Activated CD4-positive, alpha-beta T cell treated with anti-CD3 and anti-CD28 coated beads for 36 hours (primary cell): ENCODE measurements at regions of chr7 and their contacts with region 1.

Region 1: GRCh38 chr7:156892821-156893706 is at the start of gene LMBR1:
- DNase-seq: peak; percentile 97
- ATAC-seq: peak; percentile 89
- H3K4me3 Mint-ChIP-seq: peak within 1 kb of the TSS; percentile 88
- H3K27ac Mint-ChIP-seq: peak within 1 kb of the TSS; percentile 90
- H3K4me1 Mint-ChIP-seq: peaks cover 38% of the 10 kb centered on the region
- H3K27me3 Mint-ChIP-seq: no peaks in the 10 kb centered on the region
- total RNA-seq, gene LMBR1: 31.0 to 39.0 TPM

Region 2: DNA sequence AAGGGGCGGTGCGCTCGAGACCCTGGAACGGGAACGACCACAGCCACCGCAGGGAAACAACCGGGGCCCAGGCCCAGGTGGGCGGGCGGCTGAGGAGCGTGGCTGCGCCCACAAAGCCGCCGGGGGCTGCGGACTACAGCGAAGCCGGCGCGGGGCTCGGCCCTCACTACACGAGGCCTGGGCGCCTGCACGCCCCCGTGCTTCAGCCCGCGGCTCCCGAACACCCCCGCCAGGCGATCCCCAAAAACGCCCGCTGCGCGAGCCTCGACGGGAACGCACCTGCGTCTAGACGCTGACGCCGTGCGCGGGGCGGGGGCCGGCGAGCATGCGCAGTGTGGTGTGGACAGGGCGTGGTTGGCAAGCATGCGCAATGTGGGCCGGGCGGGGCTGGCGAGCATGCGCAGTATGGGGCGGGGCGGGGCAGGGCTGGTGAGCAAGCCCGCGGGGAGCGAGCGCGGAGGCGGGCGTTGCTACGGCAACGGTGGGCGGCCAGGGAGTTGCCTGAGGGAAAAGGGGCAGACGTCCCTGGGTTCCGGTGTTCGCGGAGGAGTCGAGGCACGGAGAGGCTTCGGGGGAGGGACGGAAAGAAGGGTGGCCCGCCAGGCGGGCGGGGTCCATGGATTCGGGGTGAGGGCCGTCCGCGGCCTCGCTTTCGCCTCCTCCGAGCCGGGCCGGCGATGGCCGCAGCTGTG is 252.7 kb before region 1 on chr7 and contains the start of gene RNF32:
- CTCF ChIA-PET with region 1: no interaction called
- POLR2A ChIA-PET with region 1: no interaction called
- intact Hi-C with region 1: loop called (anchors 1 kb)
- DNase-seq: peak; percentile 100
- ATAC-seq: peak; percentile 90
- H3K4me3 Mint-ChIP-seq: peak within 1 kb of the TSS; percentile 76
- H3K27ac Mint-ChIP-seq: peak within 1 kb of the TSS; percentile 87
- H3K4me1 Mint-ChIP-seq: peaks cover 15% of the 10 kb centered on the region
- H3K27me3 Mint-ChIP-seq: peaks cover 29% of the 10 kb centered on the region
- total RNA-seq, gene RNF32: 0.71 to 0.90 TPM

Region 3: DNA sequence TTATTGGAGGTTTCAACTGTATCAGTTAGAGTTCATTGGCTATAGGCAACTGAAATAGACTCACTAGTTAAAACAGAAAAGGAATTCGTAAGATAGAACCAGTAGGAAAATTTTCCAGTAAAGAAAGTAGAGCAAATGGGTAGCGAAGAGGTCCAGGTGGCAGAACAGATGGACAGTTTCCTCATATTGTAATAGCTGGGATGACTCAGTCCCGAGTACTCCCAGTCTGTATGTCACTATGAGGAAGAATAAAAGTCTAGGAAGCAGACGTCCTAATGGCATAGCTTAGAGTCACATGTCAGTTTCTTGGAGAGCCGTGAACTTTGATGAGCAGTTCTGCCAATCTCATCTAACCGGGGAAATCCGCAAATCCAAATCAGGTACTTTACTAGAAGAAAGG is 157.2 kb before region 1 on chr7:
- CTCF ChIA-PET with region 1: no interaction called
- POLR2A ChIA-PET with region 1: no interaction called
- intact Hi-C with region 1: no loop called
- DNase-seq: no peak
- ATAC-seq: no peak
- H3K4me3 Mint-ChIP-seq: no peak overlapping the region
- H3K27ac Mint-ChIP-seq: no peak overlapping the region
- H3K4me1 Mint-ChIP-seq: no peaks in the 10 kb centered on the region
- H3K27me3 Mint-ChIP-seq: no peaks in the 10 kb centered on the region

Region 4: GRCh38 chr7:156773966-156774365 is 119.1 kb before region 1 on chr7:
- CTCF ChIA-PET with region 1: no interaction called
- POLR2A ChIA-PET with region 1: no interaction called
- intact Hi-C with region 1: loop called in 1 of 2 experiments (anchors 1 kb)
- DNase-seq: no peak
- ATAC-seq: no peak
- H3K4me3 Mint-ChIP-seq: no peak overlapping the region
- H3K27ac Mint-ChIP-seq: no peak overlapping the region
- H3K4me1 Mint-ChIP-seq: peaks cover 58% of the 10 kb centered on the region
- H3K27me3 Mint-ChIP-seq: no peaks in the 10 kb centered on the region

Region 5: DNA sequence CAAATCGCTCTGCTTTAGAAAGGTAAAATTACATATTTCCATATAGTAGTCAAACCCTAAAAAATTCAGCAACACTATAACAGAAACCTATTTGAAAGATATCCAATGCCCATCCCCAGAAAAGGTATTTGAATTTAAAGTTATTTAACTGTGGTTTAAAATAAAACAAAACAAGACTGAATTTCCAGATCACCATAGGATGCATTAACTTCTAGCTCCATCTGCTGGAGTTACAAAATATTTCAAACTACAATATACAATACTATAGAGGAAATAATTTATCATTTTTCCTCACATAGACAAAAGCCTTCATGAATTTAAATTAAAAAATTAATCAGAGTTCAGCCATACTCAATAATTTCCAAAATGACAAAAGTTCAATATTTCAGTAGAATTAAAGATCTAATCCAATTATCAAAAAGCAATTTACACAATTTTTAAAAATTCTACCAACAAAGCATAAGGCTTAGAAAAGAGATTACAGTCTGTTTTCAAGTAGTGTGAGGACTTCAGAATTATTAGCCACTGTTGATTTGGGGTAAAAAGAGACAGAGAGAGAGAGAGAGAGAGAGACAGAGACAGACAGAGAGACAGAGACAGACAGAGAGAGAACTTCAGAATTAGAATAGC is 76.0 kb before region 1 on chr7:
- CTCF ChIA-PET with region 1: no interaction called
- POLR2A ChIA-PET with region 1: no interaction called
- intact Hi-C with region 1: no loop called
- DNase-seq: no peak
- ATAC-seq: no peak
- H3K4me3 Mint-ChIP-seq: no peak overlapping the region
- H3K27ac Mint-ChIP-seq: no peak overlapping the region
- H3K4me1 Mint-ChIP-seq: no peaks in the 10 kb centered on the region
- H3K27me3 Mint-ChIP-seq: no peaks in the 10 kb centered on the region

Region 6: DNA sequence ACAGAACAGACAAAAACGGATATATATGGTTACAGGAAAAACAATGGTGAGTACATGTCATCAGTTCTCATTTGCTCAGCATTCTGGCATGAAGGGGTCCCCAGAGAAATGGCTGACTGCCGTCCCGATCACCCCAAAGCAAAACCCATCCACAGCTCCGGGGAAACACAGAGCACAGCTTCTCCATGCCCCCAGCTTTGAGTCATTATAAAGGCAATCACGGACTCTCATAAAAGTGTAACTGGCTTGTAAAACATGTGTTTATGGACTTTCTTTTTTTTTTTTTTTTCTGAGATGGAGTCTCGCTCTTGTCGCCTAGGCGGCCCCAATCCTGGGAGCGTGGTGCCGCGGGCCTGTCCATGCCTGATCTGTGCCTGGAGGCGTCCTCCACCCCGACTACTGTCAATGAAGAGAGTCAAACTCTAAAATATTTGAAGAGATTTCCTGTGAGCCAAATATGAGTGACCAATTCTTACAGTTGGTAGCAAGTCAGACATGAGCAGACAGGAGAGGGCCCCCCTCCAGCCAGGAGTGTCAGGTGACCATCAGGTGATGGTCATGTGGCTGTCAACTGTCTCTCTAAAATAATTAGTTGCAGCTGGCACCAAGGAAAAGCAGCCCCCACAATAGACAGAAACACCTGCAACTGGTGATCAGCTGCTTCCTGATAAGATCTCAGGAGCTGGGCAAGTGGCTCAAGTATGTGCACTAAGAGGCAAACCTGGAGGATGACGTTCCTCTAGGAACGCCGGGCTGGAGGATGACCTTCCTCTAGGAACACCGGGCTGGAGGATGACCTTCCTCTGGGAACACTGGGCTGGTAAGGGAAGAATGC is 34.7 kb after region 1 on chr7:
- CTCF ChIA-PET with region 1: no interaction called
- POLR2A ChIA-PET with region 1: no interaction called
- intact Hi-C with region 1: loop called (anchors 1 kb)
- DNase-seq: no peak
- ATAC-seq: no peak
- H3K4me3 Mint-ChIP-seq: no peak overlapping the region
- H3K27ac Mint-ChIP-seq: no peak overlapping the region
- H3K4me1 Mint-ChIP-seq: peaks cover 34% of the 10 kb centered on the region
- H3K27me3 Mint-ChIP-seq: peaks cover 5% of the 10 kb centered on the region

Region 7: GRCh38 chr7:157299613-157300368 is 406.7 kb after region 1 on chr7:
- CTCF ChIA-PET with region 1: no interaction called
- POLR2A ChIA-PET with region 1: no interaction called
- intact Hi-C with region 1: loop called in 1 of 2 experiments (anchors 1 kb)
- DNase-seq: peak; percentile 75
- ATAC-seq: peak; percentile 32
- H3K4me3 Mint-ChIP-seq: peak overlapping the region; percentile 12
- H3K27ac Mint-ChIP-seq: peak overlapping the region; percentile 84
- H3K4me1 Mint-ChIP-seq: peaks cover 35% of the 10 kb centered on the region
- H3K27me3 Mint-ChIP-seq: no peaks in the 10 kb centered on the region